Naive thymus-derived CD4-positive, alpha-beta T cell (primary cell): ENCODE measurements at regions of chr5 and their contacts with region 1.

Region 1: DNA sequence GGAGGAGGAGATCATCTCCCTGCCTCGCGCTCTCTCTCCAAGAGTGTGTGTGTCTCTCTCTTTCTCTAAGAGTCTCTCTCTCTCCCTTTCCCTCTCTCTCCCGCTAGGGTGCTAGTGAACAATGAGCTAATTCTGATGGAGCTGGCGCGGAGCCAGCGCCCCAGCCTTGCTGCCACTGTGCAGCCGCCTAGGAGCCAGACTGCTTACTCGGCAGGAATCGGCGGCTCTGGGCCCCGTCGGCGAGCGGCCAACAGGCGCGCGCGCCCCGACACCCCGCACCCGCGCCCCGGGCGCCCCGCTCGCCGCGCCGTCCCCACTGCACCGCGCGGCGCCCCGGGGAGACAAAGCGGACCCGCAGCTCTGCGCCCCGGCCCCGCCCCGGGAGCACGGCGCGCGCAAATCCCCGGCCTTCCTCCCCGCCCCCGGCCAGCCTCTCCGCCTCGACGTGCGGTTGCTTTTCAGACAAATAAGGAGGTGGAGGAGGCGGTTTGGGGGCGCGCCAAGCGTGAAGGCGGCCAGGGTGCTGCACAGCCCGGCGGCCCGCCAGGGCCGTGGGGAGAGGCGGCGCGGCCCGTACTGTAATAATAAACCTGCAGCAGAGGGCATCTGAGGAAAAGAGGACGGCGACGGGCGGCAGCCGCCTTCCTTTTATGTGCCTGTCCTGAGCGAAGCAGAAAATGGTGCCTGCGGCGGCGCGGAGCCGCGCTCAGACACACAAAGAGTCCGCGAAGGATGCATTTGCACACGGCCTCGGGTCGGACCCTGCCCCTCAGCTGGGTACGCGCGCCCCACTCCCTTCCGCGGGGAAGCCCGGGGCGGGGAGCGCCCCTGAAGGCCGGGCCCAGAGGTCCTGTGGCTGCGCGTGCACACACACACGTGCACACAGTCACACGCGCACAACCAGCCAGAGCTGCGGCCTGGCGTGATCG is 625 bp upstream of the NREP start:
- DNase-seq: peak; percentile 65 to 89 (median 86)
- ATAC-seq: peak; percentile 87
- H3K4me3 ChIP-seq: peak overlapping the region; percentile 64
- H3K4me3 Mint-ChIP-seq: peak overlapping the region; percentile 83 to 94 (median 90)
- H3K27ac ChIP-seq: peak overlapping the region; percentile 75
- H3K27ac Mint-ChIP-seq: peak overlapping the region; percentile 57 to 92 (median 83)
- H3K4me1 ChIP-seq: peaks cover 0 to 4% of the 10 kb centered on the region in 2 donors
- H3K4me1 Mint-ChIP-seq: peaks cover 4 to 29% (median 18%) of the 10 kb centered on the region in 7 donors
- H3K27me3 ChIP-seq: no peaks in the 10 kb centered on the region
- H3K27me3 Mint-ChIP-seq: peaks cover 0 to 6% (median 0%) of the 10 kb centered on the region in 5 donors

Region 2: GRCh38 chr5:111092062-111092853 is 665.4 kb before region 1 on chr5 and contains the start of gene WDR36:
- CTCF ChIA-PET with region 1: no interaction called
- POLR2A ChIA-PET with region 1: no interaction called
- intact Hi-C with region 1: loop called (anchors 1 to 5 kb)
- DNase-seq: peak; percentile 80 to 95 (median 87)
- ATAC-seq: peak; percentile 99
- H3K4me3 ChIP-seq: peak within 1 kb of the TSS; percentile 88
- H3K4me3 Mint-ChIP-seq: peak within 1 kb of the TSS; percentile 91 to 99 (median 98)
- H3K27ac ChIP-seq: peak within 1 kb of the TSS; percentile 82
- H3K27ac Mint-ChIP-seq: peak within 1 kb of the TSS; percentile 66 to 98 (median 94)
- H3K4me1 ChIP-seq: peaks cover 11 to 20% of the 10 kb centered on the region in 2 donors
- H3K4me1 Mint-ChIP-seq: peaks cover 22 to 49% (median 39%) of the 10 kb centered on the region in 7 donors
- H3K27me3 ChIP-seq: no peaks in the 10 kb centered on the region
- H3K27me3 Mint-ChIP-seq: peaks cover 0 to 12% (median 5%) of the 10 kb centered on the region in 5 donors
- total RNA-seq, gene WDR36: 24.8 to 37.4 (median 29.7) TPM

Region 3: DNA sequence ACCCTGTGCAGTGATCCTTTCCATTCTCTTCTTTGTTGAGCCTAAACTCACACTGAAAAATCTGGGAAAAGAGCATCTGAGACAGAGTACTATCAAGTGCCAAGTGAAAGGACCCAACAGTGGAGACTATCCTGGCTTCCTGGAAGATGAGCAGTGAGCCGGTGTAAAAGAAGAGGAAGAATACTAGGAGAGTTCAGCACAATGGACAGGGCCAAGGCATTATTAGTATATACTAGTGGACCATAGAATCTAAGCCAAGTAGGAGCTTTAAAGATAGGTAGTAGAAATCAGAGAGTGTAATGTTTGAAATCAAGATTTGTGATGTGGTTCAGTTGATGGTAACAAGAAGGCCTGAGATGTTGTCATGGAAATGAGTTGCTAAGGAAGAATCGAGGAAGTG is 392.6 kb before region 1 on chr5:
- CTCF ChIA-PET with region 1: no interaction called
- POLR2A ChIA-PET with region 1: no interaction called
- intact Hi-C with region 1: no loop called
- DNase-seq: peak in 3 of 9 donors; percentile 18 to 36 (median 27)
- ATAC-seq: no peak
- H3K4me3 ChIP-seq: no peak overlapping the region
- H3K4me3 Mint-ChIP-seq: peak overlapping the region in 4 of 10 donors; percentile 2 to 37 (median 20)
- H3K27ac ChIP-seq: no peak overlapping the region
- H3K27ac Mint-ChIP-seq: peak overlapping the region in 5 of 9 donors; percentile 0 to 83 (median 49)
- H3K4me1 ChIP-seq: peaks cover 0 to 23% of the 10 kb centered on the region in 2 donors
- H3K4me1 Mint-ChIP-seq: peaks cover 7 to 88% (median 56%) of the 10 kb centered on the region in 7 donors
- H3K27me3 ChIP-seq: no peaks in the 10 kb centered on the region
- H3K27me3 Mint-ChIP-seq: no peaks in the 10 kb centered on the region

Region 4: DNA sequence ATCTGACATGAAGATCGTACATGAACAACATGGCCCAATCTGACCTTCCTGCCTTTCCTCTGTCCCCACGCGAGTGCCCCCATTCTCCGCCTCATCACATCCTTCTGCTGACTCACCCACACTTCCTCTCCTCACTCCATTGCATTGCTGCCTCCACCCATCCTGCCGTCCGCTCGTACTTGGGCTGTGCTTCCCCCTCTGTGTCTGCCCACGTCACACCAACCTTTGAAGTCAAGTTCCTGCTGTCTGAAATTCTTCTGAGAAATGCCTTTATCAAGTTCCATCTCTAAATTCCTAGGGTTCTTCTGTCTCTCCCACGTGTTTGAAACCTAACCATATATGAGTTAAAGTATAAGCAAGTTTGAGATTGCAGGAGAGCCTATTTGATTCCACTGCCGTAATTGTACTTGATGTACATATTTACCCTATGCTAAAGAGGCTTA is 227.3 kb before region 1 on chr5:
- CTCF ChIA-PET with region 1: no interaction called
- POLR2A ChIA-PET with region 1: interaction called, 5 read pairs
- intact Hi-C with region 1: loop called (anchors 2 kb)
- DNase-seq: peak; percentile 51 to 94 (median 78)
- ATAC-seq: peak; percentile 100
- H3K4me3 ChIP-seq: peak overlapping the region; percentile 6
- H3K4me3 Mint-ChIP-seq: peak overlapping the region; percentile 1 to 78 (median 66)
- H3K27ac ChIP-seq: peak overlapping the region; percentile 34
- H3K27ac Mint-ChIP-seq: peak overlapping the region; percentile 6 to 90 (median 76)
- H3K4me1 ChIP-seq: peaks cover 9 to 13% of the 10 kb centered on the region in 2 donors
- H3K4me1 Mint-ChIP-seq: peaks cover 10 to 28% (median 14%) of the 10 kb centered on the region in 7 donors
- H3K27me3 ChIP-seq: no peaks in the 10 kb centered on the region
- H3K27me3 Mint-ChIP-seq: peaks cover 0 to 3% (median 0%) of the 10 kb centered on the region in 5 donors

Region 5: GRCh38 chr5:111703662-111704061 is 54.0 kb before region 1 on chr5:
- CTCF ChIA-PET with region 1: no interaction called
- POLR2A ChIA-PET with region 1: no interaction called
- intact Hi-C with region 1: loop called in 1 of 2 experiments (anchors 5 kb)
- DNase-seq: peak in 3 of 9 donors; percentile 14 to 27 (median 18)
- ATAC-seq: peak; percentile 47
- H3K4me3 ChIP-seq: no peak overlapping the region
- H3K4me3 Mint-ChIP-seq: peak overlapping the region in 6 of 10 donors; percentile 8 to 58 (median 45)
- H3K27ac ChIP-seq: no peak overlapping the region
- H3K27ac Mint-ChIP-seq: peak overlapping the region in 3 of 9 donors; percentile 13 to 47 (median 13)
- H3K4me1 ChIP-seq: no peaks in the 10 kb centered on the region
- H3K4me1 Mint-ChIP-seq: peaks cover 4 to 19% (median 6%) of the 10 kb centered on the region in 7 donors
- H3K27me3 ChIP-seq: no peaks in the 10 kb centered on the region
- H3K27me3 Mint-ChIP-seq: peaks cover 0 to 12% (median 8%) of the 10 kb centered on the region in 5 donors

Region 6: GRCh38 chr5:112146323-112147226 is 389.0 kb after region 1 on chr5:
- CTCF ChIA-PET with region 1: no interaction called
- POLR2A ChIA-PET with region 1: no interaction called
- intact Hi-C with region 1: loop called in 1 of 2 experiments (anchors 5 kb)
- DNase-seq: peak in 8 of 9 donors; percentile 32 to 75 (median 62)
- ATAC-seq: peak; percentile 97
- H3K4me3 ChIP-seq: no peak overlapping the region
- H3K4me3 Mint-ChIP-seq: no peak overlapping the region
- H3K27ac ChIP-seq: no peak overlapping the region
- H3K27ac Mint-ChIP-seq: no peak overlapping the region
- H3K4me1 ChIP-seq: no peaks in the 10 kb centered on the region
- H3K4me1 Mint-ChIP-seq: no peaks in the 10 kb centered on the region
- H3K27me3 ChIP-seq: peaks cover 0 to 3% of the 10 kb centered on the region in 2 donors
- H3K27me3 Mint-ChIP-seq: peaks cover 8 to 17% (median 9%) of the 10 kb centered on the region in 5 donors

Region 7: GRCh38 chr5:112976432-112977309 is 1219.1 kb after region 1 on chr5 and contains the start of gene DCP2:
- CTCF ChIA-PET with region 1: no interaction called
- POLR2A ChIA-PET with region 1: no interaction called
- intact Hi-C with region 1: loop called in 1 of 2 experiments (anchors 5 kb)
- DNase-seq: peak; percentile 84 to 98 (median 97)
- ATAC-seq: peak; percentile 98
- H3K4me3 ChIP-seq: peak within 1 kb of the TSS; percentile 75
- H3K4me3 Mint-ChIP-seq: peak within 1 kb of the TSS; percentile 88 to 99 (median 98)
- H3K27ac ChIP-seq: peak within 1 kb of the TSS; percentile 83
- H3K27ac Mint-ChIP-seq: peak within 1 kb of the TSS; percentile 89 to 98 (median 95)
- H3K4me1 ChIP-seq: peaks cover 7 to 21% of the 10 kb centered on the region in 2 donors
- H3K4me1 Mint-ChIP-seq: peaks cover 35 to 54% (median 51%) of the 10 kb centered on the region in 7 donors
- H3K27me3 ChIP-seq: no peaks in the 10 kb centered on the region
- H3K27me3 Mint-ChIP-seq: no peaks in the 10 kb centered on the region
- total RNA-seq, gene DCP2: 60.2 to 101 (median 85.1) TPM